Aorta (tissue), 5 donors: ENCODE measurements at regions of chrX and their contacts with region 1.

Region 1: DNA sequence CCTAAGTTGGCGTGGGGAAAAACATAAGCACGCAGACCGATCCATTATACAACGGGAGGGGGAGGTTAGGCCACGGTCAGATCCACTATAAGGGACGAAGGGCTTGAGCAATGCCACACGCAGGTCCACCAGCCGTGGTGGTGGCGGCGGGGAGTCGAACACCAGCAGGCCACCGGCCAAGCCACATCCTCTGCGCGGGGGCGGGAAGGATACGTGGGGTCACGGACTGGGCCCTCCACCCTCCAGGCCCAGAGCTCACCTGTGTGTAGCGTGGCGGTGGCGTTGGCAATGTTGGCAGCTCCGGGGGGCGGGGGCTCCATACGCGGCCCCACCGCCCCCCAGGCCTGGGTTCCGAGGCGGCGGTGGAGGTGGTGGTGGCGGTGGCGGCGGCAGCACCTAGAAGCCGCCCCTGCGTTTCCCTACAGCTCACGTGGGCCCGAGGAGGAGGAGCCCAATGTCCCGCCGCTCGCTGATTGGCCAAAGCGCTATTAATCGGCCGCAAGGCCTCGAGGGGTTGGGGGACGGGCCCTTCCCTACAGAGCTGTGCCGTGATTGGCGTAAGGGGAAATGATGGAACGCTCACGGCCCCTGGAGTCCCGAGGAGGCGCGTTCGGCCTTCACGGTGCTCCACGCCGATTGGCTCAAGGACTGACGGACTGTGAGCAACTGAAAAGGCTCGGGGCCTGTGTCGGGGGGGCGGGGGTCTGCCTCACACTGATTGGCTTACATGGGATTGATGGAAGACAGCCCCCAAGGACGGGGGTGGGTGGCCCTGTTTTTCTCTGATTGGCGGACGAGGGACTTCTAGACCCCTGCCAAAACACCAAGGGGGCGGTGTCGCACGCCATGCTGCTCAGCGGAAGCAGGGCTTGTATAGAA is at the start of gene ELK1:
- DNase-seq: peak; percentile 96
- ATAC-seq: peak; percentile 97
- H3K4me3 ChIP-seq: peak within 1 kb of the TSS; percentile 15 to 77
- H3K27ac ChIP-seq: peak within 1 kb of the TSS in 1 of 2 donors; percentile 53
- H3K4me1 ChIP-seq: no peaks in the 10 kb centered on the region
- H3K27me3 ChIP-seq: no peaks in the 10 kb centered on the region
- total RNA-seq, gene ELK1: 27.2 to 39.2 TPM

Region 2: GRCh38 chrX:47068214-47068613 is 582.2 kb before region 1 on chrX:
- intact Hi-C with region 1: no loop called
- DNase-seq: no peak
- ATAC-seq: no peak
- H3K4me3 ChIP-seq: no peak overlapping the region
- H3K27ac ChIP-seq: no peak overlapping the region
- H3K4me1 ChIP-seq: no peaks in the 10 kb centered on the region
- H3K27me3 ChIP-seq: no peaks in the 10 kb centered on the region

Region 3: DNA sequence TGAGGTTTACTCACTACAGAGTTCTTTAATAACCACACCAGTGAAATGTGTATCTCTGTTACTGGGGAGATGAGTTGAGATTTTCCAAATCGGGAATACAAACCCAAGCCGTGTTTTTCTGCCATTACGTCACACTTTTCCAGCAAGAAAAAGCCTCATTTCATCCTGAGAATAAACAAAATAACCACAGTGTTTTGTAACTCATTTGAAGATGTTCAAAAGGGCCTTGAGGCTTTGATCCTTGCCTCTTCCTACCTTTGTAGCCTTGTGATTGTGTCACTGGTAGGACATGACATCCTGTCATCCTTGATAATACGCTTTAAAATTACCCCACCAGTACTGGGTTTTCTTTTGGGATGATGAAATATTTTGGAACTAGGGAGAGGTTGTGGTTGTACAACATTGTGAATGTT is 414.7 kb before region 1 on chrX:
- intact Hi-C with region 1: no loop called
- DNase-seq: no peak
- ATAC-seq: no peak
- H3K4me3 ChIP-seq: no peak overlapping the region
- H3K27ac ChIP-seq: no peak overlapping the region
- H3K4me1 ChIP-seq: no peaks in the 10 kb centered on the region
- H3K27me3 ChIP-seq: no peaks in the 10 kb centered on the region

Region 4: GRCh38 chrX:47836164-47837072 is 186.0 kb after region 1 on chrX and contains the start of gene ZNF81:
- intact Hi-C with region 1: loop called in 1 of 2 experiments (anchors 10 kb)
- DNase-seq: peak; percentile 97 to 98
- ATAC-seq: peak; percentile 97
- H3K4me3 ChIP-seq: peak within 1 kb of the TSS; percentile 72 to 79
- H3K27ac ChIP-seq: no peak within 1 kb of the TSS
- H3K4me1 ChIP-seq: no peaks in the 10 kb centered on the region
- H3K27me3 ChIP-seq: no peaks in the 10 kb centered on the region
- total RNA-seq, gene ZNF81: 10.1 to 13.3 TPM

Region 5: DNA sequence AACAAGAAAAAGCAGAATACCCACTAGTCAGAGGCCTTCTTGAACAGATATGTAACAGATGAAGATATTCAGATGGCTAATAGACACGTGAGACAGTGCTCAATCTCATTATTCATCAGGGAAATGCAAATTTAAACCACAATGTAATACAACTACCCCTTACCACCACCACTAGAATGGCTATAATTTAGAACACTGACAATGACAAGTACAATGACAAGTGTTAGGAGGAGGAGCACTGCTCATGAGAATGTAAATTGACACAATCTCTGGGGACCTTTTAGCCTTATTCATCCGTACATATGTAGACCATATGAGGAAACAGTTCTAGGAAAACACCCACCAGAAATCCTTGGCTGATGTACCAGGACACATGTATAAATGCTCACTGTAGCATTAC is 199.4 kb after region 1 on chrX:
- intact Hi-C with region 1: no loop called
- DNase-seq: no peak
- ATAC-seq: no peak
- H3K4me3 ChIP-seq: no peak overlapping the region
- H3K27ac ChIP-seq: no peak overlapping the region
- H3K4me1 ChIP-seq: no peaks in the 10 kb centered on the region
- H3K27me3 ChIP-seq: no peaks in the 10 kb centered on the region